AG04449 (cell line): ENCODE measurements at regions of chr1 and their contacts with region 1.

Region 1: DNA sequence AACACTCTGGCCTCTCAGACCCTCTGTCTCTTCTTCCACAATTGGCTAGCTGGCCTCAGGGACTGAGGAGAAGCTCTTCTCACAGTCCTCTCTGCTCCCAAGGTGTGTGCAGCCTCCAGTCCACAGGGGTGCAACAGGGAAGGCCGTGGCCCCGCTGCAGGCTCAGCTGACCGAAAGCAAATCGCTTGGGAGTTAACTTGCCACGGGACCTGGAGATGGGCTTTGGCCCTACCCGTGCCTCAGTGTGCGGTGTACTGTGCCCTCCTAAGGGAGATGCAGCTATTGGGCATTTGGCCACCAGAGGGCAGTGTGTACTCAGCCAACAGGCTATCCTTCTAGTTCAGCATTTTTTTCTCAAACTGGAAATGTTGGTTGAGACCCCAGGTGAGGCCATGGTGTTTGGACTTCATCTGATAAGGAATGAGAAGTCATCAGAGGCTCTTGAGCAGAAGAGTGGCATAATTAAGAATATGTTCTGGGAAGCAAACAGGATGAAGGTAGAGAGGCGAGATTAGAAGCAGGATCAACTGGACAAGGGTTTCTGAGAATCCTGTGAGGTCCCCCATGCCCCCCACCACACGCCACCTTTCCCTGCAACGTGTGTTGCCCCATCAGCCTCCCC is 42.5 kb upstream of the TMEM125 start:
- DNase-seq: no peak
- H3K4me3 ChIP-seq: no peak overlapping the region
- CTCF ChIP-seq: peak; percentile 86

Region 2: DNA sequence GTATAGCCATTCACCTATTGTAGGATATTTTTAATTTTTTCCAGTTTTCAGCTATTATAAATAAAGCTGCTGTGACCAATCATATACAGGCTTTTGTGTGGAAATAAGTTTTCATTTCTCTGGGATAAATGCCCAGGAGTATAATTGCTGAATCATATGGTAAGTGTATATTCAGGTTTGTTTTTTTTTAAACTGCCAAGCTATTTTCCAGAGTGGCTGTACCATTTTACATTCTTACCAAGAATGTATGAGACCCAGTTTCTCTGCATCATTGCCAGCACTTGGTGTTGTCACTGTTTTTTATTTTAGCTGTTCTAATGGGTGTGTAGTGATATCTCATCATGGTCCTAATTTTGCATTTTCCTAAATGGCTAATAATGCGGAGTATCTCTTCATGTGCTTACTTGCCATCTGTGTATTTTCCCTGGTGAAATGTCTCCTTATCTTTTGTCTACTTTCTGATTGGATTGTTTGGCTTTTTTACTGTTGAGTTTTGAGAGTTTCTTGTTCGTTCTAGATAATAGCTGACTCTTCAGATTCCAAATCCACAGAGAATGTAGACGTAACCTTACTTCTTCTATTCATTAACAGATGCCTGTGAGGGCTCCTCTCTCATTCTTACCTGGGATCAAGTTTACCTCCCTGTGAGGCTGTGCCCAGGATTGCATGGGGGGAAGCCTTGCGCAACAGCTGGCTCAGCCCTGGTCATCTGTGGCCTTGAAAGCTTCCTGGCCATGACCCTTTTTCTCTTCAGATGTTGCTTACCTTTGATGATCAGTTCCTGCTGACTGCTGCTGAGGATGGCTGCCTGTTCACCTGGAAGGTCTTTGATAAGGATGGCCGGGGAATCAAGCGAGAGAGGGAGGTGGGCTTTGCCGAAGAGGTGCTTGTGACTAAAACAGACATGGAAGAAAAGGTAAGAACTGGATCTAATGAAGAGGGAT is 12.5 kb before region 1 on chr1:
- CTCF ChIA-PET with region 1: interaction called, 43 read pairs
- POLR2A ChIA-PET with region 1: no interaction called
- DNase-seq: no peak
- H3K4me3 ChIP-seq: no peak overlapping the region
- CTCF ChIP-seq: no peak

Region 3: GRCh38 chr1:43358746-43359693 is 131.8 kb after region 1 on chr1 and contains the start of gene CDC20:
- CTCF ChIA-PET with region 1: interaction called, 24 read pairs
- POLR2A ChIA-PET with region 1: no interaction called
- DNase-seq: peak; percentile 58
- H3K4me3 ChIP-seq: peak within 1 kb of the TSS; percentile 74
- CTCF ChIP-seq: no peak

Region 4: GRCh38 chr1:43383449-43383848 is 156.2 kb after region 1 on chr1:
- CTCF ChIA-PET with region 1: interaction called, 32 read pairs
- POLR2A ChIA-PET with region 1: interaction called, 3 read pairs
- DNase-seq: no peak
- H3K4me3 ChIP-seq: no peak overlapping the region
- CTCF ChIP-seq: no peak

Region 5: DNA sequence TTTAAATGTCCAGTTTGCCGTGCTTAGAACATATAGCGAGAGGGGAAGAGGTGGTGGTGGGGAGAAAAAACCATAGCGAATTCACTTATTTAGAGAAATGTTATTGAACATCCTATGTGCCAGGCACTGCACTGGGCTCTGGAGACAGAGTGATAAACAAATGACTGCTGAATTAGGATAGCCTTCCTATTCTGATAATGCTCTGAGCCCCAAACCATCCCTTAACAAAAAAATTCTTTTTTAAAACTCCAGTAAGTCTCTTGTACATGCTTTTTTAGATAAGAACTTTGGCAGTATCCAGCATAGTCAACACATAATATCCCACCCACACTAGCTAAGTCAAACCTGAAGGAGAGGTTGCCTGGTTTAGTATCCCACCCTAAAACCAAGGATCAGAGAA is 171.0 kb after region 1 on chr1:
- CTCF ChIA-PET with region 1: interaction called, 12 read pairs
- POLR2A ChIA-PET with region 1: interaction called, 4 read pairs
- DNase-seq: no peak
- H3K4me3 ChIP-seq: no peak overlapping the region
- CTCF ChIP-seq: no peak

Region 6: DNA sequence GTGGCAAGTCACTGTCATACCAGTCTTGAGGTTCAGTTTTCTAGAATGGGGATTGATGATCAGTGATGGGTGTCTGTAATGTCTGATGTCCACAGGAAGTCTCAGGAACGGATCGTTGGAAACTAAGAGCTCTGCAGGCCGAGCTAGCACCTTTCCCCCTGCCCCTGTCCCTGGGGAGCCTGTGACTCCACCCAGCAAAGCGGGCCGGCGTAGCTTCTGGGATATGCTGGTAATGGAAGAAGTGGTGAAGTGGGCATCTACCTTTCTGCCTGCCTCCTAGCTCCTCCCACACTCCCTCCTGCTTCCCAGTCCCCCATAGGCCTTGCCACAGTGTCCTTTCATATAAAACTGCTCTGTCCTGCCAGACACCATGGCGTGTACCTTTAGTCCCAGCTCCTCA is 213.1 kb after region 1 on chr1:
- CTCF ChIA-PET with region 1: interaction called, 14 read pairs
- POLR2A ChIA-PET with region 1: no interaction called
- DNase-seq: no peak
- H3K4me3 ChIP-seq: no peak overlapping the region
- CTCF ChIP-seq: no peak